Right ventricle myocardium inferior (tissue), 1 donor: ENCODE measurements at regions of chr4 and their contacts with region 1.

Region 1: GRCh38 chr4:173538148-173538908 is 8.3 kb upstream of the HAND2 start:
- DNase-seq: peak; percentile 85
- ATAC-seq: peak; percentile 79

Region 2: DNA sequence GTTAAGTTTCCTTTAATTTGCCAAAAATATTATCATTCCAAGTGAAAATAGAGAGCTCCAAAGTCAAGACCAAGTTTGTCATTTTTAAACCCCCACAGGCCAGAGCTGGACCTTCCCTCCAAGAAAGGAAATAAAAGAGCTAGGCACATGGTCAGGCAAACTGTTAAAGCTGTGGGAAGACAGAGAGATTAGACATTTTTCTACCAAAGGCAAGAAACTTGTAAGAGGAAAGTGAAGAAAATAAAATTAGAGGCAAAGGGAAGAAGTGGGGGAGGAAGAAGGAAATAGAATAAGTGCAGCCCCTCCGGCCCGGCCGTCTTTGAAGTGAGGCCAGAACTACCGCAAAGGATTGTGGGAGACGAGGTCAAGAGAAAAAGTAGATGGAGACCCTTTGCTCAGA is 39.6 kb after region 1 on chr4:
- intact Hi-C with region 1: loop called (anchors 5 kb)
- DNase-seq: no peak
- ATAC-seq: no peak

Region 3: GRCh38 chr4:173682609-173683008 is 144.3 kb after region 1 on chr4:
- intact Hi-C with region 1: loop called (anchors 5 kb)
- DNase-seq: no peak
- ATAC-seq: no peak